OCI-LY7 (cell line): ENCODE measurements at regions of chr4 and their contacts with region 1.

Region 1: DNA sequence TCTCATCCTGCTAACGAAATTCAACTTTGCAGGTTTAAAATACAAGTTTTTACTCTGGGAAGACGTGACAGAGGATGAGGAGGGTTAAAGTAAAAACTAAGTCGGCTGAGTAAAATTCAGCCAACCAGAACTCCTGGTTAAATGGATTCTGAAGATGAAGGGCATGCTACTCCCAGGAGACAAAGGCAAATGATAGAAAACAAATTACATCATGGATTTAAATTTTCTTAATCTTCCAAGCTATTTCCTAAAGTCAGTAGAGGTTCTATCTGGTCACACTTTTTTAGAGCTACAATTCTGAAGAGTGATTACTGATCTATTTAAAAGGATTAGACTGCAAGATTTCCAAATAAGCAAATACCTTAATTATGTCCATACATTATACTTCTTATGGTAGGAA is 47.9 kb downstream of the ZNF827 start:
- DNase-seq: no peak
- H3K4me3 ChIP-seq: no peak overlapping the region
- H3K27ac ChIP-seq: no peak overlapping the region
- H3K4me1 ChIP-seq: peaks cover 40% of the 10 kb centered on the region
- CTCF ChIP-seq: no peak

Region 2: GRCh38 chr4:145907390-145907789 is 16.7 kb after region 1 on chr4:
- CTCF ChIA-PET with region 1: no interaction called
- POLR2A ChIA-PET with region 1: interaction called, 11 read pairs
- intact Hi-C with region 1: no loop called
- DNase-seq: no peak
- H3K4me3 ChIP-seq: no peak overlapping the region
- H3K27ac ChIP-seq: no peak overlapping the region
- H3K4me1 ChIP-seq: peaks cover 4% of the 10 kb centered on the region
- CTCF ChIP-seq: no peak

Region 3: GRCh38 chr4:145960012-145960411 is 69.3 kb after region 1 on chr4:
- CTCF ChIA-PET with region 1: no interaction called
- POLR2A ChIA-PET with region 1: no interaction called
- intact Hi-C with region 1: no loop called
- DNase-seq: no peak
- H3K4me3 ChIP-seq: no peak overlapping the region
- H3K27ac ChIP-seq: no peak overlapping the region
- H3K4me1 ChIP-seq: peaks cover 3% of the 10 kb centered on the region
- CTCF ChIP-seq: no peak

Region 4: GRCh38 chr4:146283758-146284651 is 393.3 kb after region 1 on chr4:
- CTCF ChIA-PET with region 1: no interaction called
- POLR2A ChIA-PET with region 1: no interaction called
- intact Hi-C with region 1: no loop called
- DNase-seq: no peak
- H3K4me3 ChIP-seq: no peak overlapping the region
- H3K27ac ChIP-seq: no peak overlapping the region
- H3K4me1 ChIP-seq: no peaks in the 10 kb centered on the region
- CTCF ChIP-seq: no peak